ENCODE measurements at regions of chr3 and their contacts with region 1.

Region 1: GRCh38 chr3:8741581-8742261 is 8.1 kb downstream of the CAV3 start:
- DNase-seq: peak; percentile 80 to 82
- H3K4me3 ChIP-seq: no peak overlapping the region
- H3K27ac ChIP-seq: peak overlapping the region; percentile 67
- H3K4me1 ChIP-seq: peaks cover 60% of the 10 kb centered on the region
- H3K27me3 ChIP-seq: no peaks in the 10 kb centered on the region
- CTCF ChIP-seq: no peak

Region 2: GRCh38 chr3:8501371-8502131 is 240.2 kb before region 1 on chr3 and contains the start of gene LMCD1:
- CTCF ChIA-PET with region 1: no interaction called
- POLR2A ChIA-PET with region 1: no interaction called
- intact Hi-C with region 1: loop called (anchors 1 kb)
- DNase-seq: peak; percentile 85 to 94
- H3K4me3 ChIP-seq: peak within 1 kb of the TSS; percentile 78
- H3K27ac ChIP-seq: peak within 1 kb of the TSS; percentile 97
- H3K4me1 ChIP-seq: peaks cover 83% of the 10 kb centered on the region
- H3K27me3 ChIP-seq: no peaks in the 10 kb centered on the region
- CTCF ChIP-seq: no peak
- total RNA-seq, gene LMCD1: 10.0 and 10.3 TPM in 2 replicates

Region 3: DNA sequence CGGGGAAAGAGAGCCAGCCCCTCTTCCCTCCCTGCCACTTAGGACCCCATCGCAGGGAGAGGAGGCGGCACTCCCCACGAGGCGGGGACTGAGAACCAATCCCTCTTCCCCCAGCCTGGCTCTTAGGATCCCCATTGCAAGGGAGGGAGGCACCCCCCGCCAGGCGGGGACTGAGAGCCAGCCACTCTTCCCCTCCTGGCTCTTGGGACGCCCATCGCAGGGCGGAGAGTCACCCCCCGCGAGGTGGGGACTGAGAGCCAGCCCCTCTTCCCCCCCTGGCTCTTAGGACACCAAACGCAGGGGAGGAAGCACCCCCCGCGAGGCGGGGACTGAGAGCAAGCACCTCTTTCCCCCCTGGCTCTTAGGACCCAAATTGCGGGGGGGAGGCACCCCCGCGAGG is 63.0 kb before region 1 on chr3:
- CTCF ChIA-PET with region 1: no interaction called
- POLR2A ChIA-PET with region 1: interaction called, 7 read pairs
- intact Hi-C with region 1: loop called (anchors 1 kb)
- DNase-seq: no peak
- H3K4me3 ChIP-seq: peak overlapping the region; percentile 57; the same call in 1 of the 2 replicates
- H3K27ac ChIP-seq: peak overlapping the region; percentile 95
- H3K4me1 ChIP-seq: peaks cover 53% of the 10 kb centered on the region
- H3K27me3 ChIP-seq: no peaks in the 10 kb centered on the region
- CTCF ChIP-seq: no peak

Region 4: GRCh38 chr3:8730656-8731055 is 11.1 kb before region 1 on chr3:
- CTCF ChIA-PET with region 1: no interaction called
- POLR2A ChIA-PET with region 1: interaction called, 10 read pairs
- intact Hi-C with region 1: no loop called
- DNase-seq: no peak
- H3K4me3 ChIP-seq: no peak overlapping the region
- H3K27ac ChIP-seq: no peak overlapping the region
- H3K4me1 ChIP-seq: peaks cover 30% of the 10 kb centered on the region
- H3K27me3 ChIP-seq: no peaks in the 10 kb centered on the region
- CTCF ChIP-seq: no peak